Spleen (tissue), 13 donors: ENCODE measurements at regions of chr9 and their contacts with region 1.

Region 1: GRCh38 chr9:135085830-135086546 is 1.5 kb upstream of the OLFM1 start:
- DNase-seq: peak; percentile 82
- H3K4me3 ChIP-seq: peak overlapping the region in 6 of 8 donors; percentile 3 to 61 (median 24)
- H3K27ac ChIP-seq: peak overlapping the region in 5 of 8 donors; percentile 18 to 66 (median 54)
- H3K4me1 ChIP-seq: peaks cover 13 to 54% (median 33%) of the 10 kb centered on the region in 6 donors
- H3K27me3 ChIP-seq: peaks cover 3 to 77% (median 39%) of the 10 kb centered on the region in 7 donors
- CTCF ChIP-seq: peak; percentile 49 to 89 (median 83)
- POLR2A ChIP-seq: no peak

Region 2: DNA sequence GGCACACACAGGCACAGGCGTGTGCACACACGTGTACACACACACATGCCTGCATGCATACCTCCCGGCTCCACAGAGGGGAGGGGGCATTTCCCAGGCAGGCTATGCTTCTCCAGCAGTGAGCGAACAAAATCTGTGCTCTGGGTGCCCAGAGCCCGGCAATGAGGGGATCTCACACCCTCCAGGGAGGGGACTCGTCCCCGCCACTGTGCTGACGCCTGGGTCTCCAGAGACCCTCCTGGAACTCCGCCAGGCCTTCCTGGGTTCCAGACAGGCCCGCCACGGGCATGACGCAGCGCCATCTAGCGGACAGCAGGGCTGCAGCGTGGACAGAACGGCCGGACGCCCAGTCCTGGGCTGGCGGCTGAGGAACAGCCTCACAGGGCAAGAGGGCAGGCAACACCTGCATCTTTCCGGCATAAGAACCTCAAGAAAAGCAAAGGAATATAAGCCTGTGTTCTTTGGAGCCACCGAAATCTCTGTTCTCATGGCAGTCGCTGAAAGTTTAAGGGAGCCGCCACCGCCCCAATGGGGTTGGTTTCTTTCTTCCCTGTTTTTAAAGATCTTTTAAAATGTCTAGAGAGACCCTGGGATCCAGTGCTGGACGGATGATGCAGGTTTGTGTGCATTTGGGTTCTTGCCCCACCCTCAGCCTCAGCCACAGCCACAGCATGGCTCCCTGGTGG is 258.0 kb after region 1 on chr9:
- intact Hi-C with region 1: loop called (anchors 5 kb)
- DNase-seq: peak; percentile 84
- H3K4me3 ChIP-seq: no peak overlapping the region
- H3K27ac ChIP-seq: no peak overlapping the region
- H3K4me1 ChIP-seq: peaks cover 0 to 6% (median 2%) of the 10 kb centered on the region in 6 donors
- H3K27me3 ChIP-seq: peaks cover 0 to 99% (median 31%) of the 10 kb centered on the region in 7 donors
- CTCF ChIP-seq: peak; percentile 28 to 90 (median 76)
- POLR2A ChIP-seq: no peak

Region 3: GRCh38 chr9:135410831-135411473 is 325.0 kb after region 1 on chr9:
- intact Hi-C with region 1: loop called (anchors 5 kb)
- DNase-seq: peak; percentile 64
- H3K4me3 ChIP-seq: no peak overlapping the region
- H3K27ac ChIP-seq: no peak overlapping the region
- H3K4me1 ChIP-seq: peaks cover 0 to 8% (median 6%) of the 10 kb centered on the region in 6 donors
- H3K27me3 ChIP-seq: peaks cover 0 to 68% (median 15%) of the 10 kb centered on the region in 7 donors
- CTCF ChIP-seq: no peak
- POLR2A ChIP-seq: no peak